ENCODE measurements at regions of chr9 and their contacts with region 1.

Region 1: DNA sequence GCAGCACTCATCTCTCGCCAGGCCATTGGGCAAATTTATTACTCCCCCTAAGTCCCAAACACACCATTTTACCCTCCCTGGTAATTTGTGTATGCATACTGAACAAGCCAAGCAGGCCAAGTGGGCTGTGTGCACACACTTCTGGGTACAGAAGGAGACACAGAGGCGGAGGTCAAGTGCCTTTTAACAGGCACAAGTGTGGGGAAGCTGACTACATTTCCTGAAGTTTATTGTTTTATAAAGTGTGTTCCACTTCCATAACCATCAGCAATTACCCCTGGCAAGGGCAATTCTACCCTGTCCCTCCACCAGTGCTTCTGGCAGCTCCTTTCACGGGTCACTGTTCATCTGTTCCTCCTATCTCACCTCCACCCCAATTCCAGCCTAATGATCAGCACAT is 93.9 kb downstream of the SETX start:
- DNase-seq: no peak
- ATAC-seq: no peak
- H3K4me3 Mint-ChIP-seq: no peak overlapping the region
- H3K27ac Mint-ChIP-seq: peak overlapping the region in 6 of 10 donors; percentile 5 to 69 (median 31)
- H3K4me1 Mint-ChIP-seq: peaks cover 6 to 15% (median 13%) of the 10 kb centered on the region in 4 donors
- H3K27me3 Mint-ChIP-seq: no peaks in the 10 kb centered on the region

Region 2: GRCh38 chr9:131590908-131591844 is 669.7 kb before region 1 on chr9:
- POLR2A ChIA-PET with region 1: no interaction called
- DNase-seq: peak; percentile 55 to 85 (median 67)
- ATAC-seq: peak; percentile 95 to 98
- H3K4me3 Mint-ChIP-seq: peak overlapping the region in 3 of 10 donors; percentile 28 to 43 (median 30)
- H3K27ac Mint-ChIP-seq: peak overlapping the region; percentile 32 to 83 (median 72)
- H3K4me1 Mint-ChIP-seq: peaks cover 20 to 36% (median 29%) of the 10 kb centered on the region in 4 donors
- H3K27me3 Mint-ChIP-seq: no peaks in the 10 kb centered on the region

Region 3: GRCh38 chr9:132240753-132241493 is 19.9 kb before region 1 on chr9:
- POLR2A ChIA-PET with region 1: interaction called, 13 read pairs
- DNase-seq: peak; percentile 96 to 100 (median 100)
- ATAC-seq: peak; percentile 88 to 91
- H3K4me3 Mint-ChIP-seq: peak overlapping the region; percentile 94 to 99 (median 98)
- H3K27ac Mint-ChIP-seq: peak overlapping the region; percentile 45 to 97 (median 94)
- H3K4me1 Mint-ChIP-seq: peaks cover 11 to 25% (median 19%) of the 10 kb centered on the region in 4 donors
- H3K27me3 Mint-ChIP-seq: peaks cover 0 to 3% (median 0%) of the 10 kb centered on the region in 5 donors